ENCODE measurements at regions of chr20 and their contacts with region 1.

Region 1: DNA sequence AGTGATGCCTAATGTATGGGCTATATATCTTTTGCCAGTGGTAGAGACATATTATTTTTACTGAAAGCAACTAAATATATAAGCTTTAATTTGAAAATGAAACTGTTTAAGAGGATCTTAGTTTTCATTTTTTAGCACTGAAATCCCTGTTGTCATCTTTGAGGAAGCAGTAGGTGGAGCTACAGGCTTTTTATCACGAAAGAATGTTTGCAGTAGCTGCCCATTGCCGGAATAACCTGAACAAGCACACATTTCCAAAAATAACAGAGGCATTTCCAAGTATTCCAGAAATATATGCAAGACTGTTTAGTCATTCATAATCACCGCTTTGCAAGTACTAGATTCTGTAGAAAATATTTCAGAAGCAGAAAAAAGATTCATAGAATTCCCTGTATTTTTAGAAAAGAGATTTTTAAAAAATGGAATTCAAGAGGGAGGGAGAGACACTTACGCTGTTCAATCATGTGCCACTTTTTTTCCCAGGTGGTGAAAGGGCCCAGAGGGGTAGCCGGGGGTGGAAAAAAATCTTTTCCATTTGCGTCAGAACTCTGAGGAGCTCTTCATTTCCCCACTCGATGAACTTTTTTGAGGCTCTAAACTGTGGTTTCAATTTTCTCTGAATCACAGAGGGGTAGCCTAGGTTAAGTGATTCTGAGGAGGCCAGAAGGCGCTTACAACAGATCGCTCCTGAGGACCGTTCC is 142.5 kb upstream of the FERMT1 start:
- DNase-seq: no peak
- ATAC-seq: peak; percentile 50; the same call in 2 of the 3 replicates
- H3K4me3 ChIP-seq: no peak overlapping the region
- H3K27ac ChIP-seq: no peak overlapping the region
- H3K4me1 ChIP-seq: no peaks in the 10 kb centered on the region
- H3K27me3 ChIP-seq: no peaks in the 10 kb centered on the region
- CTCF ChIP-seq: peak in 2 of 3 experiments; percentile 6 to 50; a peak in 2 of 6 replicates
- EP300 ChIP-seq: no peak
- POLR2A ChIP-seq: no peak
- RAD21 ChIP-seq: peak; percentile 40

Region 2: DNA sequence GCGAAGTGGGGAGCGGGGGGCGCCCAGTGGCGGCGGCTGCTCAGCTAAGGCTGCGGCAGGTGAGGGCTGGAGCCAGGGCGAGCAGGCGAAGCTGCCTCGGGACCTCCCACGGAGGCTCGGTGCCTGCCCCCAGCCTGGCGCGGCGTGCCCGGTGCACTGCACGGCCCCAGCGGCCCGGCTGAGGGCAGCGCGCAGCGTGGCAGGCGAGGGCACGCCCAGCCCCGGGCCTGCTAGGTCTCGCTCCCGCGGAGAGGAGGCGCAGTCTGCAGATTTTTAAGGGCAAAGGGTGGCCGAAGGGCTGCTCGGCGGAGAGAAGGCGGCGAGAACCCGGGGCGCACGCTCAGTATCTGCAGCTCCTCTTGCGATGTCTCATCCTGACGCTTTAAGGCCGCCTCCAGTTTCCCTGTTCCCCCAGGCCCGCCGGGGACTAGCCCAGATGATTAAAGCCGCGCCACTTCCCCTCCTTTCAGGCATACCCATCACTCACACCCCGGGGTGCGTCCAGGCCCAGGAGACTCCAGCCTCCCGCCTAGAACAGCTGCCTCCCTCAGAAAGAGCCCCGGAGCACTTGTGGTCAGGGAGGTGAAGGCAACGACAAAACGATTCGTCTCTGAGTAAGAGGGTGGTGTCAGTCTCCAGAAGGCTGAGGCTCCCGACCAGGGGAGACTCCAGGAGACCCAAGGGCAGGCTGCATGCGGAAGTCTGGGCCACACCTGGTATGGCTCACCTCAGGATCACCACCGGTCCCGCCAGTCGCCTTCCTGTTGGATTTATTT is 142.3 kb before region 1 on chr20 and contains the start of gene FERMT1:
- CTCF ChIA-PET with region 1: no interaction called
- POLR2A ChIA-PET with region 1: no interaction called
- RAD21 ChIA-PET with region 1: no interaction called
- SMC1A ChIA-PET with region 1: no interaction called
- in situ Hi-C with region 1: no loop called
- intact Hi-C with region 1: no loop called
- DNase-seq: no peak
- ATAC-seq: peak; percentile 95
- H3K4me3 ChIP-seq: no peak within 1 kb of the TSS
- H3K27ac ChIP-seq: no peak within 1 kb of the TSS
- H3K4me1 ChIP-seq: no peaks in the 10 kb centered on the region; the same call in 1 of the 2 replicates
- H3K27me3 ChIP-seq: peaks cover 1 to 17% of the 10 kb centered on the region in 2 experiments
- CTCF ChIP-seq: no peak; a peak in 1 of 6 replicates
- EP300 ChIP-seq: no peak
- POLR2A ChIP-seq: no peak
- RAD21 ChIP-seq: no peak
- polyA plus RNA-seq, gene FERMT1: 0.08 to 0.26 TPM

Region 3: GRCh38 chr20:6566821-6567220 is 301.5 kb after region 1 on chr20:
- CTCF ChIA-PET with region 1: no interaction called
- POLR2A ChIA-PET with region 1: no interaction called
- RAD21 ChIA-PET with region 1: no interaction called
- SMC1A ChIA-PET with region 1: no interaction called
- in situ Hi-C with region 1: no loop called
- intact Hi-C with region 1: loop called (anchors 5 kb)
- DNase-seq: no peak
- ATAC-seq: no peak
- H3K4me3 ChIP-seq: no peak overlapping the region
- H3K27ac ChIP-seq: no peak overlapping the region
- H3K4me1 ChIP-seq: no peaks in the 10 kb centered on the region
- H3K27me3 ChIP-seq: no peaks in the 10 kb centered on the region
- CTCF ChIP-seq: no peak
- EP300 ChIP-seq: no peak
- POLR2A ChIP-seq: no peak
- RAD21 ChIP-seq: no peak

Region 4: DNA sequence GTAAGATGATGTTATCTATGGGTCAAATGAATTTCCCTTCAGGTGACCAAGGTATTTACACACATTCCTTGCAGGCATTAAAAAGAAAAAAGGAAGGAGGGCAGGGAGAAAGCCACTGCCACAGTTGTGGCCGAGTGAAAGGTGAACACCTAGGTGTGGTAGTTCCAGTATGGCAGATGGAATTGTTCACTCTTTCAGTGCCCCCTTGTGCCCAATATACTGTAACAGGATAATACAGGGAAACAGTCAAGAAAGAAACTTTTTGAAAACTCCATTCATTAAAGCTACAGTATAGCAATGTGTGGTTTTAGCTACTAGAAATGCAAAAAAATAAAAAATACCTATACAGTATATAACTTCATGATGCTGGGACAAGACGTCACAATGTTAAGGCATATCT is 554.3 kb after region 1 on chr20:
- CTCF ChIA-PET with region 1: interaction called, 4 read pairs
- POLR2A ChIA-PET with region 1: no interaction called
- RAD21 ChIA-PET with region 1: no interaction called
- SMC1A ChIA-PET with region 1: no interaction called
- in situ Hi-C with region 1: no loop called
- intact Hi-C with region 1: loop called (anchors 10 kb)
- DNase-seq: no peak
- ATAC-seq: peak; percentile 84
- H3K4me3 ChIP-seq: no peak overlapping the region
- H3K27ac ChIP-seq: no peak overlapping the region
- H3K4me1 ChIP-seq: no peaks in the 10 kb centered on the region
- H3K27me3 ChIP-seq: no peaks in the 10 kb centered on the region
- CTCF ChIP-seq: no peak; a peak in 1 of 6 replicates
- EP300 ChIP-seq: no peak
- POLR2A ChIP-seq: no peak
- RAD21 ChIP-seq: no peak

Region 5: GRCh38 chr20:7240490-7240889 is 975.1 kb after region 1 on chr20:
- CTCF ChIA-PET with region 1: no interaction called
- POLR2A ChIA-PET with region 1: no interaction called
- RAD21 ChIA-PET with region 1: no interaction called
- SMC1A ChIA-PET with region 1: no interaction called
- in situ Hi-C with region 1: no loop called
- intact Hi-C with region 1: loop called (anchors 5 kb)
- DNase-seq: no peak
- ATAC-seq: no peak
- H3K4me3 ChIP-seq: no peak overlapping the region
- H3K27ac ChIP-seq: no peak overlapping the region
- H3K4me1 ChIP-seq: no peaks in the 10 kb centered on the region
- H3K27me3 ChIP-seq: no peaks in the 10 kb centered on the region
- CTCF ChIP-seq: no peak
- EP300 ChIP-seq: no peak
- POLR2A ChIP-seq: no peak
- RAD21 ChIP-seq: no peak